ENCODE measurements at regions of chr11 and their contacts with region 1.

Region 1: GRCh38 chr11:36389811-36390210 is 93.7 kb downstream of the PRR5L start:
- DNase-seq: no peak
- H3K4me3 Mint-ChIP-seq: no peak overlapping the region
- H3K27ac Mint-ChIP-seq: no peak overlapping the region
- H3K4me1 Mint-ChIP-seq: peaks cover 40% of the 10 kb centered on the region
- H3K27me3 Mint-ChIP-seq: peaks cover 9% of the 10 kb centered on the region

Region 2: GRCh38 chr11:36313750-36314433 is 75.9 kb before region 1 on chr11:
- CTCF ChIA-PET with region 1: no interaction called
- POLR2A ChIA-PET with region 1: no interaction called
- DNase-seq: no peak
- H3K4me3 Mint-ChIP-seq: no peak overlapping the region
- H3K27ac Mint-ChIP-seq: no peak overlapping the region
- H3K4me1 Mint-ChIP-seq: no peaks in the 10 kb centered on the region
- H3K27me3 Mint-ChIP-seq: peaks cover 31% of the 10 kb centered on the region

Region 3: GRCh38 chr11:36376888-36377758 is 12.7 kb before region 1 on chr11:
- CTCF ChIA-PET with region 1: interaction called, 10 read pairs
- POLR2A ChIA-PET with region 1: no interaction called
- DNase-seq: peak; percentile 55
- H3K4me3 Mint-ChIP-seq: peak overlapping the region; percentile 82
- H3K27ac Mint-ChIP-seq: peak overlapping the region; percentile 82
- H3K4me1 Mint-ChIP-seq: peaks cover 37% of the 10 kb centered on the region
- H3K27me3 Mint-ChIP-seq: peaks cover 81% of the 10 kb centered on the region

Region 4: GRCh38 chr11:36409152-36409816 is 19.5 kb after region 1 on chr11:
- CTCF ChIA-PET with region 1: no interaction called
- POLR2A ChIA-PET with region 1: no interaction called
- DNase-seq: peak; percentile 31
- H3K4me3 Mint-ChIP-seq: peak overlapping the region; percentile 36
- H3K27ac Mint-ChIP-seq: peak overlapping the region; percentile 87
- H3K4me1 Mint-ChIP-seq: peaks cover 50% of the 10 kb centered on the region
- H3K27me3 Mint-ChIP-seq: no peaks in the 10 kb centered on the region